HEK293T (cell line): ENCODE measurements at regions of chr11 and their contacts with region 1.

Region 1: GRCh38 chr11:82775736-82776346 is 42.2 kb upstream of the FAM181B start:
- DNase-seq: peak; percentile 63

Region 2: GRCh38 chr11:82682003-82682751 is 93.7 kb before region 1 on chr11:
- CTCF ChIA-PET with region 1: no interaction called
- POLR2A ChIA-PET with region 1: no interaction called
- DNase-seq: peak; percentile 54

Region 3: GRCh38 chr11:82787981-82788380 is 12.1 kb after region 1 on chr11:
- CTCF ChIA-PET with region 1: interaction called, 10 read pairs
- POLR2A ChIA-PET with region 1: no interaction called
- DNase-seq: no peak

Region 4: GRCh38 chr11:82802710-82803109 is 26.9 kb after region 1 on chr11:
- CTCF ChIA-PET with region 1: no interaction called
- POLR2A ChIA-PET with region 1: no interaction called
- DNase-seq: no peak